ENCODE measurements at regions of chr5 and their contacts with region 1.

Region 1: DNA sequence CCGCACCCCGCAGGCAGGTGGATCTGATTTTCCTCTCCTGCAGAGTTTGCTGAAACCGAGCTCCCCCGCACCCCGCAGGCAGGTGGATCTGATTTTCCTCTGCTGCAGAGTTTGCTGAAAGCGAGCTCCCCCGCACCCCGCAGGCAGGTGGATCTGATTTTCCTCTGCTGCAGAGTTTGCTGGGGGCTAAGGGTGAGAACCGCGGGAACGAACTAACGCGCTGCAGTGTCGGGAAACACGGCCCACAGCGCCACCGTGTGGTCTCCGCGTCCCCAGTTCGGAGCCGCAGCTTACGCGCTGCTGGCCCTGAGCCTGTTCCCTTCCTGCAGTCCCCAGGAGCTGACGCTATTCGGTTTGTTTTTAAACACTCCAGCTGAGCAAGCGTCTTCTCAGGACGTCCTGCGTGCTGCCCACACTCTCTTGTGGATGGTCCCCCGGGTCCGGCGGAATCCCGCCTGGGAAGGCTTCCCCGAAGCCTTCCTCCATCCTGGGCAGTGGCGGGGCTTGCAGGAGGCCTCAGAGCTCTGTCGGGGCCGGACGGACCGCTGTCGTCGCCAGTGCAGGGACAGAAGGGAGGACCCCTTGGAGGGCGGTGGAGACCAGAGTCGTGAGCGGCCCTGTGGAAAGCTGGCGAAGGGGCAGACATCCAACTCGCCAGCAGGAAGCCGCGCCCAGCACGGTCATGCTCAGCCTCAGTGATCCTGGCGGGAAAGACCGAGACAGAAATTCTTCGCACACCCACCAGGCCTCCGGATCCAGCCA is 121.2 kb upstream of the LPCAT1 start:
- DNase-seq: peak; percentile 74
- H3K4me3 Mint-ChIP-seq: no peak overlapping the region
- H3K27ac Mint-ChIP-seq: no peak overlapping the region
- H3K4me1 Mint-ChIP-seq: peaks cover 11% of the 10 kb centered on the region
- H3K27me3 Mint-ChIP-seq: peaks cover 42% of the 10 kb centered on the region

Region 2: DNA sequence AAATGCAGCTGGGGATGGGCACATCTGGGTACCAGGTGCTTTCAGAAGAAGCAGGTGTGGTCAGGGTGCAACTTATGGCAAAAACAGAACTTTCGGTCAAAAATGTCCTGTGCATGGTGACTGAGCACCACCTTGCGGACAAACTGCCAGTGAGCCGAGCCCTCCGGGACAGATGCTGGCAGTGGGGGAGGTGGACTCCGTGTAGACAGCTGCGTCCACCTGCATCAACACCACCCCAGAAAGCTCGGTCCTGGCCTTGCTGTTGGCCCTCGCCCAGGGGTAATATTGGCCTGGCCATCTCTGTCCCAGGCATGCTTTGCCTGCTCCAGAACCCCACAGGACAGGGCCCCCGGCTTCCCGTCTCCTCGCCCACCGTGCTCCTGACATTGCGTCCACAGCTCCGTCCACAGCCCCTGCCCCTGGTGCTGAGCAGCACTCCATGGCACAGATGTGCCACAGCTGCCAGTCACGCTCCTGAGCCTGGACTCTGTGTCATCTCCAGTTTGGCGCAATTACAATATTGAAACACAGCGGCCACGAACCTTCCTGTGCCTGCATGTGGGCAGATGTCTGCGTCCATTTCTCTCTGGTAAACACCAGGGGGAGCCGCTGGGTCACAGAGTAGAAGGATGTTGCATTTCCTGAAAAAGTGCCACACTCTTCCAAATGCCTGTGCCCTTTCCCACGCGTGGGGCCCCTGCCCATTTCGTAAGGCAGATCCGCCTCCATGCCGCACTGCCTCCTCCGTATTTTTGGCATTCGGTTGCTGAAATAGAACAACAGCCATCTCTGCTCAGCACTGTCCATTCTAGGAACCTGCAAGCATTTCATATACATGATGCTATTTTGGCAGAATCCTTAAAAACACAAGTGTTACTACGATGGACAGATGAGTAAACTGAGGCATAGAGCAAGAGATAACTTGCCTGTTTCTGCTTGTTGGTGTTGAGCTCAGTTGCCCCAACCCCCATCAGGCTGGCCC is 477.0 kb before region 1 on chr5:
- CTCF ChIA-PET with region 1: interaction called, 24 read pairs
- POLR2A ChIA-PET with region 1: no interaction called
- DNase-seq: peak; percentile 72
- H3K4me3 Mint-ChIP-seq: peak overlapping the region; percentile 42
- H3K27ac Mint-ChIP-seq: no peak overlapping the region
- H3K4me1 Mint-ChIP-seq: peaks cover 8% of the 10 kb centered on the region
- H3K27me3 Mint-ChIP-seq: peaks cover 4% of the 10 kb centered on the region

Region 3: GRCh38 chr5:1380011-1380817 is 264.8 kb before region 1 on chr5:
- CTCF ChIA-PET with region 1: interaction called, 14 read pairs
- POLR2A ChIA-PET with region 1: interaction called, 3 read pairs
- DNase-seq: peak; percentile 51
- H3K4me3 Mint-ChIP-seq: peak overlapping the region; percentile 34
- H3K27ac Mint-ChIP-seq: no peak overlapping the region
- H3K4me1 Mint-ChIP-seq: peaks cover 17% of the 10 kb centered on the region
- H3K27me3 Mint-ChIP-seq: peaks cover 3% of the 10 kb centered on the region

Region 4: DNA sequence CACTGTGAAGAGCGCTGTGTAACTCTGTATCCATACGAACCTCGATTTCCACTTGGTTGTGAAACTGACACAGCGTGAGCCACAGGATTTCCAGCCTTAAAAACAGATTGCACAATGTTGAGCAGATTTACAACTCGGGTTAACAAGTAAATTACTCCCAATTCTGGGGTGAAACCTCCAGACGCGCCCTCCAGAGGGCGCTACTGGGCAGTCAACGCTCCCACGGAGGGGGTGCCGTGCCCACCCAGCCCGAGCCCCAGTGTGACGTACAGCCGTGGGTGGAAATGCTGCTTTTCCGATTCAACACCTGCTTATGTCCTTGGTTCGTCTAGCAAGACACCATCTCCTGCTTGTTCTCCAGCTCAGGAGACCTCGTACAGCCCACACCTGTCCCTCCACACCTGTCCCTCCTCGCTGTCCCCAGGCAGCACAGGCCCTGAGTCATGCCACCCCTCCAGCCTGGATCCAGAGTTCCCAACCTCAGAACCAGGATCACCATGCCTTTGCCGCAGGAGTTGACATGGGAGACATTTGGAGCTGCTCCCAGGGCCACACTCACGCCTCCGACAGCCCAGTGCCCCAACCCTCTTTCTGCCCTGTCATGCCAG is 165.3 kb before region 1 on chr5:
- CTCF ChIA-PET with region 1: interaction called, 11 read pairs
- POLR2A ChIA-PET with region 1: no interaction called
- DNase-seq: peak; percentile 41
- H3K4me3 Mint-ChIP-seq: no peak overlapping the region
- H3K27ac Mint-ChIP-seq: no peak overlapping the region
- H3K4me1 Mint-ChIP-seq: peaks cover 6% of the 10 kb centered on the region
- H3K27me3 Mint-ChIP-seq: no peaks in the 10 kb centered on the region

Region 5: GRCh38 chr5:1659100-1659981 is 14.3 kb after region 1 on chr5:
- CTCF ChIA-PET with region 1: interaction called, 11 read pairs
- POLR2A ChIA-PET with region 1: no interaction called
- DNase-seq: no peak
- H3K4me3 Mint-ChIP-seq: no peak overlapping the region
- H3K27ac Mint-ChIP-seq: no peak overlapping the region
- H3K4me1 Mint-ChIP-seq: no peaks in the 10 kb centered on the region
- H3K27me3 Mint-ChIP-seq: peaks cover 13% of the 10 kb centered on the region

Measured in activated CD4-positive, alpha-beta memory T cell treated with anti-CD3 and anti-CD28 coated beads, Interleukin-2, amount 10 ng/mL, durations not matched to agents 7 days and 5 days (primary cell).